ENCODE measurements at regions of chr1 and their contacts with region 1.

Region 1: DNA sequence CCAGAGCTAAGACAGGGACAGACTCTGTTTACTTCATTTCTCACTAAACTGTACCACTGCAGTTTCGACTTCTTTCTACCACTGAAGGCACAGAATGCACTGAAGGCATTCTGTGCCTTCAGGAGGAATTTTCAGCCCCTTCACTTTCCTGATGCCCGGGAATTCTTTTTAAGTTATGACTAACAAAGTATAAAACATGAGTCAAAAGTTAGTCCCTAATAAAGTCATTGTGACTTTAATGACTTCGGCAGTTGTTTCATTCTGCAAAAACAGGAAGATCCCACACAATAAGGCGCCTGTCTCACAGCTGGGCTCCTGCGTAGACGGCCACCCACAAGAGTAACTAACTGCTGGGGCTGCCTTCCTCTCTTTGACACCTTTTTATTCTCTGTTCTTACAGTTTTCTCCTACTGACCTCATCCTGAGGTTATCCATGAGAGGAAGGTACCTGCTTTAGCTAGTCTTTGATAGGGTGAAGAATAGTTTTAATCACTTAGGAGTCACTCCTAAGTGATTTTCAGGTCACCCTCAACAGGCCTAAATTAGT is 183.9 kb upstream of the SGIP1 start:
- DNase-seq: peak; percentile 62
- H3K4me3 Mint-ChIP-seq: peak overlapping the region; percentile 75
- H3K27ac Mint-ChIP-seq: peak overlapping the region; percentile 95
- H3K4me1 Mint-ChIP-seq: peaks cover 95% of the 10 kb centered on the region
- H3K27me3 Mint-ChIP-seq: no peaks in the 10 kb centered on the region

Region 2: GRCh38 chr1:66282343-66282852 is 67.7 kb before region 1 on chr1:
- CTCF ChIA-PET with region 1: interaction called, 12 read pairs
- DNase-seq: peak; percentile 77
- H3K4me3 Mint-ChIP-seq: no peak overlapping the region
- H3K27ac Mint-ChIP-seq: peak overlapping the region; percentile 90
- H3K4me1 Mint-ChIP-seq: peaks cover 92% of the 10 kb centered on the region
- H3K27me3 Mint-ChIP-seq: no peaks in the 10 kb centered on the region

Region 3: GRCh38 chr1:66360285-66360724 is 10.2 kb after region 1 on chr1:
- CTCF ChIA-PET with region 1: interaction called, 12 read pairs
- DNase-seq: no peak
- H3K4me3 Mint-ChIP-seq: no peak overlapping the region
- H3K27ac Mint-ChIP-seq: peak overlapping the region; percentile 43
- H3K4me1 Mint-ChIP-seq: peaks cover 82% of the 10 kb centered on the region
- H3K27me3 Mint-ChIP-seq: no peaks in the 10 kb centered on the region

Measured in activated naive CD4-positive, alpha-beta T cell treated with anti-CD3 and anti-CD28 coated beads, Interleukin-2, amount 10 ng/mL, durations not matched to agents 7 days and 5 days (primary cell).